WTC11 (cell line): ENCODE measurements at regions of chr16 and their contacts with region 1.

Region 1: GRCh38 chr16:30844671-30845449 is 49.0 kb downstream of the BCL7C start:
- DNase-seq: peak; percentile 78
- ATAC-seq: peak; percentile 82
- H3K4me3 Mint-ChIP-seq: no peak overlapping the region
- H3K27ac Mint-ChIP-seq: no peak overlapping the region
- H3K4me1 Mint-ChIP-seq: peaks cover 4% of the 10 kb centered on the region
- H3K27me3 Mint-ChIP-seq: peaks cover 34% of the 10 kb centered on the region
- CTCF ChIP-seq: peak; percentile 56; the same call in 1 of the 2 replicates

Region 2: GRCh38 chr16:30588651-30589050 is 256.2 kb before region 1 on chr16:
- CTCF ChIA-PET with region 1: no interaction called
- POLR2A ChIA-PET with region 1: no interaction called
- DNase-seq: no peak
- ATAC-seq: no peak
- H3K4me3 Mint-ChIP-seq: no peak overlapping the region
- H3K27ac Mint-ChIP-seq: no peak overlapping the region
- H3K4me1 Mint-ChIP-seq: peaks cover 10% of the 10 kb centered on the region; the same call in 1 of the 2 replicates
- H3K27me3 Mint-ChIP-seq: no peaks in the 10 kb centered on the region
- CTCF ChIP-seq: no peak

Region 3: DNA sequence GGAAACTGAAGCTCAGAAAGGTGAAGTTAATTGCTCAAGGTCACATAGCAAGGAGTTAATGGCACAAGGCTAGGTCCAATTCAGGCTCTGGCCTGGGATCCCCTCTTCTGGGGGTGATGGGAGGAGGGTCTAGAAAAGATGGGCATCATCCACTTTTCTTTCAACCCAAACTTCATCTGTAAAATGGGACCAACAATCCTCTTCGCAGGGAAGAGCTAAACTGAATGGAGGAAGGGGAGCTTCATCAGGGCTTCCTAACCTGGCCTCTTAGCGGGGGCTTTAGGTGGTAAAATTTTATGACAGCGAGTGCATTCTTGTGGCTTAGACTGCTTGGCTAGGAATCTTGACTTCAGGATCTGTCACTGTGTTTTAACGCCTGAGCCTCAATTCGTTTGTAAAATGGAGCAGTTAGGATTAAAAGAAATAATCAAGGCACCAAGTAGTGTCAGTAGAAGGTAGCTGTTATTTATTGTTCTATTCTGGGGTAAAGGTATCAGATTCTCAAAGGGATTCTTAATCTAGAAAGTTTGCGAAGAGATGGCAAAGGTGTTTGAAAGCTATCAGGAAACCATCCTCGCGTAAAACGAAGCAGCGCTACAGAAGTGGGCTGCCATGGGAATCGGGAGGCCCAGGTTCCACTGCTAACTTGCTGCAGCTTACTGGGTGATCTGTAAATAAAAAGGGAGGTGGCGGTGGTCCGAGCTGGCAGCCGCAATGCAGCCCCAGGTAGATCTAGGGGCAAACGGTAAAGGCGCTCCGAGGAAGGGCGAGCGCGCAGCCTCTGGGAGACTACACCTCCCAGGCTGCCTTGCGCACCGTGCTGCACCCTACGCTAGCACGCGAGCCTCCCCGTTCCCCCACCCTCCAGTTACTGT is 147.4 kb before region 1 on chr16:
- CTCF ChIA-PET with region 1: no interaction called
- POLR2A ChIA-PET with region 1: no interaction called
- DNase-seq: no peak
- ATAC-seq: peak; percentile 88
- H3K4me3 Mint-ChIP-seq: peak overlapping the region; percentile 95
- H3K27ac Mint-ChIP-seq: peak overlapping the region; percentile 100
- H3K4me1 Mint-ChIP-seq: peaks cover 24% of the 10 kb centered on the region
- H3K27me3 Mint-ChIP-seq: peaks cover 57% of the 10 kb centered on the region
- CTCF ChIP-seq: no peak

Region 4: GRCh38 chr16:30805370-30806169 is 39.3 kb before region 1 on chr16:
- CTCF ChIA-PET with region 1: interaction called, 39 read pairs
- POLR2A ChIA-PET with region 1: no interaction called
- DNase-seq: peak; percentile 79
- ATAC-seq: peak; percentile 74
- H3K4me3 Mint-ChIP-seq: peak overlapping the region; percentile 82
- H3K27ac Mint-ChIP-seq: 0 out of 2 replicates have a peak overlapping the region, but pooled peaks have one; percentile 29
- H3K4me1 Mint-ChIP-seq: peaks cover 14% of the 10 kb centered on the region
- H3K27me3 Mint-ChIP-seq: peaks cover 79% of the 10 kb centered on the region
- CTCF ChIP-seq: no peak

Region 5: DNA sequence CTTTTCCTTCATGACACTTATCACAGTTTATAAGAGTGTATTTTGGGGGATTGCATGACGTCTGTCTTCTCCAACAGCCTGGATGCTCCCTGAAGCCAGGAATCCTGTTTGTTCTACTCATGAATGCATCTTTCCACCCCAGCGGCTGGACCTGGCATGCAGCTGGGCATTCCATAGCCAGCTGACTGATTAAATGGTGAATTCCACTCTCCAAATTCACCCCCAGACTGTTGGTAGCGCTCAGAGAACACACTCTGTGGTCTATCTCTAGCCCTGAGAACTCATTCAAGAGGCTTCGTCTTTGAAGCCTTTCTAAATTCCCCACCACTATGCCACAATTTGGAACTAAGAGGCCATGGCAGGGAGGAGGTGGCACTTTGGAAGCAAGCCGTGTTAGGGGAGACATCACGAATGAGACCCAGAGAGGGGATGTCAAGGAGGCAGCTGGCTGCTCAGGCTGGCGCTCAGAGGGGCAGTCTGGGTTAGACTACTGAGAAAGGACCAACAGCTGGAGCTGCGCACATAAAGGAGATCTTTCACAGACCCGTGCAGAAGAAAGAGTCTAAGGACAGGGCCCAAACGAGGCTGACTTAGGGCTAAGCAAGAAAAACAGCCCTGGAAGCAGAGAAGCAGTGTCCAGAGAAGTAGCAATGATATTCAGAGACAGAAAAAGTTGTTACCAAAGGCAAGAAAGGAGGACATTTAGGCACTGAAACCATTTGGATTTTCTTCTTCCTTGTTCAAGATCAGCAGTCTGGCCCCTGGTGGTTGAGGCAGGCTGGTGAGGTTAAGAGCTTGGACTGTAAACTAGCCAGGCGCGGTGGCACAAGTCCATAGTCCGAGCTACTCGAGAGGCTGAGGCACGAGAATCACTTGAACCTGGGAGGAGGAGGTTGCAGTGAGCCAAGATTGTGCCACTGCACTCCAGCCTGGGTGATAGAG is 15.5 kb before region 1 on chr16:
- CTCF ChIA-PET with region 1: interaction called, 29 read pairs
- POLR2A ChIA-PET with region 1: no interaction called
- DNase-seq: no peak
- ATAC-seq: peak; percentile 44; the same call in 1 of the 2 replicates
- H3K4me3 Mint-ChIP-seq: no peak overlapping the region
- H3K27ac Mint-ChIP-seq: no peak overlapping the region
- H3K4me1 Mint-ChIP-seq: no peaks in the 10 kb centered on the region
- H3K27me3 Mint-ChIP-seq: peaks cover 36% of the 10 kb centered on the region
- CTCF ChIP-seq: no peak

Region 6: DNA sequence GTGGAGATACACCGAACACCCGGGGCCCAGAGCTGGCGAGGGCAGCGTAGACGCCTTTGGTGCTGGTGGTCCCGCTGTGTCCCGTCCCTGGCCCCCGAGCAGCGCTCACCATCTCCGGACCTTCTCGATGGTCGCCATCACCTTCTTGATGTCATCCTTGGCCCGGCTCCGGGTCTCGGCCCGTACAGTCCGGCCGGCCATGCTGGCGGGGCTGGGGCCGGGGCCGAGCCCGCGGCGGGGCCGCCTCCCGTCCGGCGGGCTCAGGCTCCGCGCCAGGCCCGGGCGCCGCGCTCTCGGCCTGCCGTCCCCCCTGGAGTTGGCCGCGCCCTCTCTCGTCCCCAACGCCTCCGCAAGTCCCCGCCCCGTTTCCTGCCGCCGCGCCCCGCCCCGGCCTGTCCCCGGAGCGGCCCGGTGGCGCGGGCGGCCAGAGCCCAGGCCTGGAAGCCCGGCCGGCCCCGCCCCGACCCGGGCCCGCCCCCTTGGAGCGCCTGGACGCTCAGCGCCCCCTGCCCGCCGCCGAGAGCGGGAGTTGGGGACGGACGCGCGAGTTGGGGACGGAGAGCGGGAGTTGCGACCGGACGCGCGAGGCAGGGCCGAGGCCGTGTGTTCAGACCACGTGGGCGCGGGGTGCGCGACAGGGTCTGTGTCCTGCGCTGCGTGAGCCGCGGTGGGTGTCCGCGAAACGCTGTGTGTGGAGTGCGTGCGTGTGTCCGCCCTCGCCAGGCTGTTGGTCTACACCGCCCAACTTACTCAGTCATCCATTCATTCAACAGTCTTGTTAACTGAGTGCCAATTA is 49.1 kb after region 1 on chr16 and contains the start of gene BCL7C:
- CTCF ChIA-PET with region 1: interaction called, 24 read pairs
- POLR2A ChIA-PET with region 1: no interaction called
- DNase-seq: peak; percentile 92
- ATAC-seq: peak; percentile 76
- H3K4me3 Mint-ChIP-seq: peak within 1 kb of the TSS; percentile 86
- H3K27ac Mint-ChIP-seq: no peak within 1 kb of the TSS; the same call in 1 of the 2 replicates
- H3K4me1 Mint-ChIP-seq: peaks cover 24% of the 10 kb centered on the region
- H3K27me3 Mint-ChIP-seq: peaks cover 25% of the 10 kb centered on the region
- CTCF ChIP-seq: no peak
- total RNA-seq, gene BCL7C: 18.3 to 20.3 TPM (median 18.7 TPM) in 3 replicates

Region 7: DNA sequence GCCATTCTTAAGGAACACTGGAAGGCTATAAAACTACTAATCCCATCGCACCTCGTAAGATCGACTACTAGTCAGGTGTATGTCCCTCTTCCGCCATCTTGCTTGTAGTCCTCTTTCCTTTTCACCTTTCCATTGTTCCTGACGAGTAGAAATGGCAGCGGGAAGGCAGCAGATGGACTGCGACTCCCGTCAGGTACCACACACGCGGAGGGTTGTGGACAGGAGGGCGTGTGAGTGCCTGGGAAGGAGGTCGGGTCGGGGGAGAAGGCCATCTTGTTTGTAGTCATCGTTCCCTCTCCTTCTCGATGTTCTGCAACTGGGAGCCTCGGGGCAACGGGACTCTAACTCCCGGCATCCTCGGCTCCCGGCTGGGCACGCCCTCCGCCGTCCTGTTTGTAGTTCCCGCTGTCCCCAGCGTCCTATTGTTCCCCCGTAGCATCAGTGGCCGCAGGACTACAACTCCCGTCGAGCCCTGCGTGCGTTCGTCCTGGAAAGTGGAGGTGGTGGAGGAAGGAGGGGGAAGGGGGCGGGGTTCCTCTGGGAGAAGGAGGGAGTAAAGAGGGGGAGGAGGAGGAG is 78.2 kb after region 1 on chr16:
- CTCF ChIA-PET with region 1: interaction called, 19 read pairs
- POLR2A ChIA-PET with region 1: no interaction called
- DNase-seq: peak; percentile 99
- ATAC-seq: peak; percentile 60
- H3K4me3 Mint-ChIP-seq: peak overlapping the region; percentile 99
- H3K27ac Mint-ChIP-seq: peak overlapping the region; percentile 100
- H3K4me1 Mint-ChIP-seq: peaks cover 20% of the 10 kb centered on the region
- H3K27me3 Mint-ChIP-seq: no peaks in the 10 kb centered on the region; the same call in 1 of the 2 replicates
- CTCF ChIP-seq: no peak